PC-9 (cell line): ENCODE measurements at regions of chr5 and their contacts with region 1.

Region 1: GRCh38 chr5:36584009-36584875 is 22.2 kb upstream of the SLC1A3 start:
- DNase-seq: no peak
- H3K4me3 ChIP-seq: no peak overlapping the region
- H3K27ac ChIP-seq: no peak overlapping the region
- H3K4me1 ChIP-seq: no peaks in the 10 kb centered on the region
- H3K27me3 ChIP-seq: no peaks in the 10 kb centered on the region
- CTCF ChIP-seq: no peak

Region 2: GRCh38 chr5:36403632-36404311 is 180.5 kb before region 1 on chr5:
- CTCF ChIA-PET with region 1: no interaction called
- POLR2A ChIA-PET with region 1: no interaction called
- intact Hi-C with region 1: loop called (anchors 10 kb)
- DNase-seq: no peak
- H3K4me3 ChIP-seq: no peak overlapping the region
- H3K27ac ChIP-seq: no peak overlapping the region
- H3K4me1 ChIP-seq: no peaks in the 10 kb centered on the region
- H3K27me3 ChIP-seq: no peaks in the 10 kb centered on the region
- CTCF ChIP-seq: no peak